ENCODE measurements at regions of chr1 and their contacts with region 1.

Region 1: DNA sequence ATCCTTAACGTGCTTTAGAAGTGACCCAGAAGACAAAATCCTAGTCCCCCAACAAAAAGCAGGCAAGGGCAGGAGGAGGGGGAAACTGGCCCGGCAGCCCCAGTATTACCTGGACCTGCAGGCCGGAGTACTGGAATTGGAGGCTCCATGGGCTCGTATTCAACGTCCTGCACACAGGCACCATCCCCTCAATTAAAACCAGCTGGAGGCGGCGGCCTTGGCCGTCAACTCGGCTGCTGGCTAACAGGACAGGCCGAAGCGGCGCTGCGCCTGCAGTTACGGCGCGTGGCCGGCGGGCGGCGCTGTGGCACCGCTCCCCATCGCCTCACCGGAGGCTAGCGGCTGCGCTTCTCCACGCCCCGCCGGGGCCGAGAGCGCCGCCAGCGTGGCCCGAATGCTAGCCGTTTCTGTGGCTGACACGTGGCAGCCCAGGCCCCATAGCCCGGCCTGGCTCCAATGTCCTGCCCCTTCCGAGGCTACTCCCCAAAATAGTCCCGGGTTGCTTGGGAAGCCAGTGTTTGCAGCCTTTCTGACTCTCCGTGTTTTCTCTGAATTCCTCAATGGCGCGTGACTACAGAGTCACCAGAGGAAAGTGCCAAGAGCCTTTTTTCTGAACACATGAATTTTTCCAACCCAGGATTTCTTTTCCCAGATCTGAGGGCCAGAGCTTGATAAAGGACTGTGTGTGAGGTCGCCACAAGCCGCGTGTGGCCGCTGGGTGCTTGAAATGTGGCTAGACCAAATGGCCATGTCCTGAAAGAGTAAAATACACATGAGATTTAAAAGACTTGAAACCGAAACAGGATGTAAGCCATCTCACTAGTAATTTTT is 82.5 kb downstream of the HHIPL2 start:
- DNase-seq: peak; percentile 66 to 89 (median 71)
- ATAC-seq: peak; percentile 94
- H3K4me3 ChIP-seq: peak overlapping the region; percentile 54 to 68
- H3K4me3 Mint-ChIP-seq: peak overlapping the region; percentile 85
- H3K27ac ChIP-seq: peak overlapping the region; percentile 58 to 65
- H3K27ac Mint-ChIP-seq: peak overlapping the region; percentile 93
- H3K4me1 ChIP-seq: peaks cover 6% of the 10 kb centered on the region
- H3K4me1 Mint-ChIP-seq: peaks cover 14% of the 10 kb centered on the region
- H3K27me3 ChIP-seq: no peaks in the 10 kb centered on the region
- H3K27me3 Mint-ChIP-seq: no peaks in the 10 kb centered on the region
- CTCF ChIP-seq: peak; percentile 100

Region 2: DNA sequence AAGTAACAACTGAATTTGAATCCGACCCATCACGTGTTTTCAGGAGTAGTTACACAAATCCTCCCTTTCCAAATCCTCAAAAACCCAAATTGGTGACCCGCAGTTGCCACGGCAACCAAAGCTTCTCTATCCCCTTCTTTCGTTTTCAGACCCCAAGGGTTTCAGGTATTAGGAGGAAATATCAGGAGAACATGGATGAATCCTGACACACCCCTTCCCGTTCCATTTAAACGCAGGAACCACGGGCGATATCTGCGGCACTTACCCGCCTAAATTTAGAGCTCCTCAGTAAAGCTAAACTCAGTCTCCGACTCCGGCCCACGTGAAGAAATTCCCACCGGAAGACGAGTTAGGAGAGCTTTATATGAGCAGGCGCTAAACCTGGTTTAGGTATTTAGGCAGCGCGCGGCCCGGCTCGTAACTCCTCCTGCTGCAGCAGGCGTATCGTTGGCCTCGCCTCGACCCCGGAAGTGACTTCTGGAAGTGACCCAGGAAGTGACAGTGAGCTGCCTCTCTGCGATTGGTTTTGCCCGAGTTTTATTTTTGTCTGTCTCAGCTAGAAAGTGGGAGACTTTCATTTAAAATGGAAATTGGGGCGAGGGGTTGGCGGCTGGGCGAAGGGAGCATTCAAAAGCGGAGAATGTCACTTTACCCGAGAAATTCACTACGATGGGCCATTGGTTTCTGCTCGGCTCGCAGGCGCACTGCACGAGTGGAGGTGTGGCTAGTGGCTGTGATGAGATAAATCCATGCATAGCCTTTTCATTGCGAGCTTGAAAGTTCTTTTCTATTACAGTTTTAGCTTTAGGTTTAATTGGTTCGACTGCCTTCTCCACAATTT is 124.3 kb after region 1 on chr1 and contains the start of gene TAF1A:
- CTCF ChIA-PET with region 1: interaction called, 4 read pairs
- POLR2A ChIA-PET with region 1: interaction called, 4 read pairs
- intact Hi-C with region 1: loop called in 1 of 2 experiments (anchors 1 kb)
- DNase-seq: peak; percentile 69 to 93 (median 86)
- ATAC-seq: peak; percentile 98
- H3K4me3 ChIP-seq: peak within 1 kb of the TSS; percentile 68 to 77
- H3K4me3 Mint-ChIP-seq: peak within 1 kb of the TSS; percentile 98
- H3K27ac ChIP-seq: peak within 1 kb of the TSS; percentile 85 to 87
- H3K27ac Mint-ChIP-seq: peak within 1 kb of the TSS; percentile 99
- H3K4me1 ChIP-seq: peaks cover 11% of the 10 kb centered on the region
- H3K4me1 Mint-ChIP-seq: peaks cover 52% of the 10 kb centered on the region
- H3K27me3 ChIP-seq: no peaks in the 10 kb centered on the region
- H3K27me3 Mint-ChIP-seq: no peaks in the 10 kb centered on the region
- CTCF ChIP-seq: no peak
- total RNA-seq, gene TAF1A: 5.3 to 5.6 TPM

Region 3: GRCh38 chr1:222617367-222617951 is 152.0 kb after region 1 on chr1:
- CTCF ChIA-PET with region 1: interaction called, 10 read pairs
- POLR2A ChIA-PET with region 1: no interaction called
- intact Hi-C with region 1: loop called (anchors 5 kb)
- DNase-seq: peak; percentile 88 to 99 (median 93)
- ATAC-seq: peak; percentile 91
- H3K4me3 ChIP-seq: peak overlapping the region; percentile 67 to 68
- H3K4me3 Mint-ChIP-seq: peak overlapping the region; percentile 93
- H3K27ac ChIP-seq: peak overlapping the region; percentile 83
- H3K27ac Mint-ChIP-seq: peak overlapping the region; percentile 98
- H3K4me1 ChIP-seq: peaks cover 20% of the 10 kb centered on the region
- H3K4me1 Mint-ChIP-seq: peaks cover 31% of the 10 kb centered on the region
- H3K27me3 ChIP-seq: peaks cover 0 to 3% of the 10 kb centered on the region in 2 experiments
- H3K27me3 Mint-ChIP-seq: peaks cover 16% of the 10 kb centered on the region
- CTCF ChIP-seq: no peak

Region 4: GRCh38 chr1:223081181-223081994 is 616.0 kb after region 1 on chr1:
- CTCF ChIA-PET with region 1: interaction called, 6 read pairs
- POLR2A ChIA-PET with region 1: no interaction called
- intact Hi-C with region 1: loop called in 1 of 2 experiments (anchors 1 kb)
- DNase-seq: peak; percentile 45 to 82 (median 70)
- ATAC-seq: peak; percentile 97
- H3K4me3 ChIP-seq: peak overlapping the region; percentile 45
- H3K4me3 Mint-ChIP-seq: peak overlapping the region; percentile 68
- H3K27ac ChIP-seq: peak overlapping the region in 1 of 2 experiments; percentile 16
- H3K27ac Mint-ChIP-seq: peak overlapping the region; percentile 41
- H3K4me1 ChIP-seq: peaks cover 4% of the 10 kb centered on the region
- H3K4me1 Mint-ChIP-seq: no peaks in the 10 kb centered on the region
- H3K27me3 ChIP-seq: peaks cover 0 to 3% of the 10 kb centered on the region in 2 experiments
- H3K27me3 Mint-ChIP-seq: peaks cover 2% of the 10 kb centered on the region
- CTCF ChIP-seq: peak; percentile 66

Region 5: GRCh38 chr1:223683586-223684487 is 1218.4 kb after region 1 on chr1:
- CTCF ChIA-PET with region 1: no interaction called
- POLR2A ChIA-PET with region 1: no interaction called
- intact Hi-C with region 1: loop called (anchors 2 to 5 kb)
- DNase-seq: peak; percentile 44 to 75 (median 67)
- ATAC-seq: peak; percentile 51
- H3K4me3 ChIP-seq: no peak overlapping the region
- H3K4me3 Mint-ChIP-seq: no peak overlapping the region
- H3K27ac ChIP-seq: no peak overlapping the region
- H3K27ac Mint-ChIP-seq: no peak overlapping the region
- H3K4me1 ChIP-seq: no peaks in the 10 kb centered on the region
- H3K4me1 Mint-ChIP-seq: peaks cover 3% of the 10 kb centered on the region
- H3K27me3 ChIP-seq: no peaks in the 10 kb centered on the region
- H3K27me3 Mint-ChIP-seq: peaks cover 13% of the 10 kb centered on the region
- CTCF ChIP-seq: peak; percentile 69

Measured in CD8-positive, alpha-beta T cell (primary cell).